ENCODE measurements at regions of chr19 and their contacts with region 1.

Region 1: GRCh38 chr19:53906211-53907192 is 2.6 kb upstream of the CACNG7 start:
- DNase-seq: peak; percentile 26 to 90 (median 78)

Region 2: GRCh38 chr19:53853707-53854106 is 52.8 kb before region 1 on chr19:
- intact Hi-C with region 1: loop called (anchors 10 kb)
- DNase-seq: no peak

Region 3: DNA sequence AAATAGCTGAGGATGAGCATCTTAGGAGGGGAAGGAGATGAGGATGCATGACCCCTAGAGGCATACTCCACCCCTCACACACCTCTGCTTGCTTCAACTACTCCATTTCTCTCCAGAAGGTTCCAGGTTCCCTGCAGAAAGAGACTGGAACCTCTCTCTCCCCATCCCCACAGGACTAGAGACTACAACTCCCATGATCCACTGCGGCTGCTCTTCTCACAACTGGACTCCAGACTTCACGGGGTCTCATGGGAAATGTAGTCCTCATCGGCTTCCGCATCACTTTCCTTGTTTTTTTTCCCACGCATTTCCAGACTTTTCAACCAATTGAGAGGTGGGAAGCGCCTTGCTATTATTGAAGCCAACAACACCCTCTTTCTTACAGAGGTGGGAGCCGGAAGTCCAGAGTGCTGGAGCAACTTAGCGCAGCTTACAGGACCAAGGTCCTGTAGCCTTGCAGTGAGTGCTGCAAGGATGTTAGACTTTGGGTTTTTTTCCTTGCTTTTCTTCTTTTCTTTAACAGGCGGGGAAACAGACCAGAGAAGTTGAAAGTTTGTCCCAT is 71.0 kb after region 1 on chr19:
- intact Hi-C with region 1: loop called (anchors 2 kb)
- DNase-seq: peak; percentile 61 to 95 (median 87)

Region 4: GRCh38 chr19:54023191-54023590 is 116.7 kb after region 1 on chr19:
- intact Hi-C with region 1: loop called (anchors 5 kb)
- DNase-seq: no peak

Measured in head of caudate nucleus (tissue), 42 donors.